Mammary epithelial cell (primary cell): ENCODE measurements at regions of chr1 and their contacts with region 1.

Region 1: GRCh38 chr1:236281654-236282424 is at the start of gene ERO1B:
- DNase-seq: peak; percentile 93
- H3K4me3 ChIP-seq: peak within 1 kb of the TSS; percentile 54 to 90 (median 74)
- H3K27ac ChIP-seq: peak within 1 kb of the TSS; percentile 25
- H3K4me1 ChIP-seq: peaks cover 4% of the 10 kb centered on the region
- H3K27me3 ChIP-seq: no peaks in the 10 kb centered on the region
- CTCF ChIP-seq: peak in 1 of 2 donors; percentile 9
- total RNA-seq, gene ERO1B: 3.5 to 4.0 TPM

Region 2: GRCh38 chr1:236142253-236143103 is 139.4 kb before region 1 on chr1 and contains the start of gene GPR137B:
- CTCF ChIA-PET with region 1: no interaction called
- dilution Hi-C with region 1: no loop called
- in situ Hi-C with region 1: no loop called
- intact Hi-C with region 1: loop called (anchors 5 kb)
- DNase-seq: peak; percentile 43
- H3K4me3 ChIP-seq: peak within 1 kb of the TSS; percentile 85 to 98 (median 88)
- H3K27ac ChIP-seq: peak within 1 kb of the TSS; percentile 45
- H3K4me1 ChIP-seq: peaks cover 22% of the 10 kb centered on the region
- H3K27me3 ChIP-seq: no peaks in the 10 kb centered on the region
- CTCF ChIP-seq: no peak
- total RNA-seq, gene GPR137B: 10.2 to 24.7 TPM

Region 3: DNA sequence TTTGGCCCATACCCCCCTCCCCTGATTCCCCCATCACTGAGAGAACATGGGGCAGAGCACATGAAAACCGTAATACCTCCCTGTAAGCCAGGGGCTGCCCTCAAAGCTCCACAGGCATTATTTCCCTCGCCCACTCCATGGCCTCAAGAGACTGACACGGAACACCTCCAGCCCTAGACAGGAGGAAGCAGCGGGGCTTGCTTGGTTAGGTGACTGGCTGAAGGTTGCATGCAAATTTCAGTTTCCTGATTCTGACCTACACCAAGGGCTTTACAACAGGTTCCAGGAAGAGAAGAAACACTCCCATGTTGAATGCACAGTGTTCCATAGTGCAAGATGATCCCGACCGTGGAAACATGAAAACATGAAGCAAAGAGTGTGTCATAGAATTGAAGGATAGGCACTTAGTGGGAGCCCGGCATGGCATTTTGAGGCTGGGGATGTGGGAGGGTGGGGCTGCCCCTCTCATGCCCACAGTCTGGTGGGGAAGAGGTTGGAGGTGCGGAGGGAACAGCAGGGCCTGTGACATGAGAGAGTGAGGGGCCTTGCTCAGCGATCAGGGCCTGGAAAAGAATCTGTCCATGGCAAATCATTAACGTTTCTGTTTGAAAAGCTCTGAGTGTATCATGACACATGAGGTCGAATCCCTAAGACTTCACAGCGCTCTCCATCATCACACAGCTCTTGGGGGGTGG is 106.0 kb before region 1 on chr1:
- CTCF ChIA-PET with region 1: no interaction called
- dilution Hi-C with region 1: no loop called
- in situ Hi-C with region 1: no loop called
- intact Hi-C with region 1: no loop called
- DNase-seq: no peak
- H3K4me3 ChIP-seq: no peak overlapping the region
- H3K27ac ChIP-seq: no peak overlapping the region
- H3K4me1 ChIP-seq: no peaks in the 10 kb centered on the region
- H3K27me3 ChIP-seq: no peaks in the 10 kb centered on the region
- CTCF ChIP-seq: no peak

Region 4: DNA sequence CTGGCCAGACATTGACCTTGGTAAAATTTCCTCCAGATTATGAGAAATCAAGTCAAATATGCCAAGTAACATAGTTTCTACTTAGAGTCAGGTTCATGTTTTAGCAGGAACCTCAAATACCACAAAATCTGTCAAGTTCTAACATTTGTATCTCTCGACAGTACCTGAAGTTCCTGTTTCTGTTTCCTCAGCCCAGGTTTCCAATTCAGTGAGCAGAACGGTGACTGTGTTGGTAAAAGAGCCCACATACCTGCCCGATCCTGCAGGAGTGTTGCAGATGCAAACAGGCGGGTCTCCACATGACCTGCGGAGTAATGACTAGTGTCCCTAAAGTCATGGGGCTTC is 184.1 kb after region 1 on chr1:
- CTCF ChIA-PET with region 1: no interaction called
- dilution Hi-C with region 1: no loop called
- in situ Hi-C with region 1: no loop called
- intact Hi-C with region 1: loop called (anchors 10 kb)
- DNase-seq: peak; percentile 94
- H3K4me3 ChIP-seq: peak overlapping the region in 1 of 3 experiments; percentile 5
- H3K27ac ChIP-seq: peak overlapping the region; percentile 8
- H3K4me1 ChIP-seq: peaks cover 21% of the 10 kb centered on the region
- H3K27me3 ChIP-seq: no peaks in the 10 kb centered on the region
- CTCF ChIP-seq: no peak